T-cell (primary cell): ENCODE measurements at regions of chr1 and their contacts with region 1.

Region 1: GRCh38 chr1:171485375-171486047 is at the start of gene PRRC2C:
- DNase-seq: peak; percentile 81 to 99 (median 93)
- ATAC-seq: peak; percentile 86 to 95 (median 94)
- H3K4me3 ChIP-seq: peak within 1 kb of the TSS; percentile 68 to 100
- H3K4me3 Mint-ChIP-seq: peak within 1 kb of the TSS; percentile 97 to 99 (median 99)
- H3K27ac ChIP-seq: peak within 1 kb of the TSS; percentile 97
- H3K27ac Mint-ChIP-seq: peak within 1 kb of the TSS; percentile 88 to 94
- H3K4me1 ChIP-seq: peaks cover 26 to 40% of the 10 kb centered on the region in 2 experiments
- H3K4me1 Mint-ChIP-seq: peaks cover 50 to 55% (median 55%) of the 10 kb centered on the region in 3 donors
- H3K27me3 ChIP-seq: no peaks in the 10 kb centered on the region
- H3K27me3 Mint-ChIP-seq: no peaks in the 10 kb centered on the region
- total RNA-seq, gene PRRC2C: 229 to 340 (median 259) TPM

Region 2: GRCh38 chr1:171515299-171515698 is 29.8 kb after region 1 on chr1:
- CTCF ChIA-PET with region 1: interaction called, 4 to 38 read pairs
- POLR2A ChIA-PET with region 1: interaction called, 5 to 11 read pairs
- DNase-seq: no peak
- ATAC-seq: no peak
- H3K4me3 ChIP-seq: no peak overlapping the region
- H3K4me3 Mint-ChIP-seq: no peak overlapping the region
- H3K27ac ChIP-seq: no peak overlapping the region
- H3K27ac Mint-ChIP-seq: peak overlapping the region in 1 of 2 donors; percentile 23
- H3K4me1 ChIP-seq: peaks cover 0 to 11% of the 10 kb centered on the region in 2 experiments
- H3K4me1 Mint-ChIP-seq: peaks cover 45 to 51% (median 47%) of the 10 kb centered on the region in 3 donors
- H3K27me3 ChIP-seq: no peaks in the 10 kb centered on the region
- H3K27me3 Mint-ChIP-seq: no peaks in the 10 kb centered on the region

Region 3: GRCh38 chr1:173202430-173203145 is 1717.1 kb after region 1 on chr1:
- CTCF ChIA-PET with region 1: no interaction called
- POLR2A ChIA-PET with region 1: interaction called in 1 of 2 experiments, 15 read pairs
- DNase-seq: peak in 1 of 35 experiments; percentile 53
- ATAC-seq: no peak
- H3K4me3 ChIP-seq: no peak overlapping the region
- H3K4me3 Mint-ChIP-seq: no peak overlapping the region
- H3K27ac ChIP-seq: no peak overlapping the region
- H3K27ac Mint-ChIP-seq: peak overlapping the region; percentile 0 to 18
- H3K4me1 ChIP-seq: peaks cover 23 to 35% of the 10 kb centered on the region in 2 experiments
- H3K4me1 Mint-ChIP-seq: peaks cover 50 to 52% (median 50%) of the 10 kb centered on the region in 3 donors
- H3K27me3 ChIP-seq: no peaks in the 10 kb centered on the region
- H3K27me3 Mint-ChIP-seq: no peaks in the 10 kb centered on the region